ENCODE measurements at regions of chr1 and their contacts with region 1.

Region 1: DNA sequence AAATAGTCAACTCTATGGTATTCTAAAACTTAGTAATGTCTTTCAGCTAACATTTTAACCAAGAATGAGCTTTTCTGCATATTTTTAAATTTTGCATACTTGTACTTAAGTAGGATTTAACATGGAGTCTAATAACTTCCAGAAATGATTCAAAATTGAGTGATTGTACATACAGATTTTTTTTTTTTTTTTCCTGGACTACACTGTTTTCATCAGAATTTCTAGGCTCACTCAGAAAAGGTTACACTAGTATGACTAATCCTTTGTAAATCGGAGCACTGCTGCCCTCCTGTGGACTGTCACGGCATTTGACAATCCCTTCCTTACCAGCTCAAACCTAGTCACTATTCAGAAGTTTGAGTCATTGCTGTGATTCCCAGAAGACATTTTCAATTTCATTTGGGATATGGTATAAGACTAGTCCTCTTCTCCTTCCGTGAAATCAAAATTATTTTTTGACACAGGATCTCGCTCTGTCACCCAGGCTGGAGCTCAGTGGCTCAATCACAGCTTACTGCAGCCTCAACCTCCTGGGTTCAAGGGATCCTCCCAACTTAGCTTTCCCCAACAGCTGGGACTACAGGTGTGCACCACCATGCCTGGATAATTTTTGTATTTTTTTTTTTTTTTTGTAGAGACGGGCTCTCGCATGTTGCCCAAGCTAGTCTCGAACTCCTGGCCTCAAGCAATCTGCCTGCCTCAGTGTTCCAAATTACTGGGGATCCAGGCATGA is 45.5 kb downstream of the CD46 start:
- DNase-seq: peak; percentile 97
- H3K4me3 Mint-ChIP-seq: no peak overlapping the region
- H3K27ac Mint-ChIP-seq: peak overlapping the region; percentile 46
- H3K4me1 Mint-ChIP-seq: peaks cover 14% of the 10 kb centered on the region
- H3K27me3 Mint-ChIP-seq: no peaks in the 10 kb centered on the region
- CTCF ChIP-seq: peak; percentile 95

Region 2: DNA sequence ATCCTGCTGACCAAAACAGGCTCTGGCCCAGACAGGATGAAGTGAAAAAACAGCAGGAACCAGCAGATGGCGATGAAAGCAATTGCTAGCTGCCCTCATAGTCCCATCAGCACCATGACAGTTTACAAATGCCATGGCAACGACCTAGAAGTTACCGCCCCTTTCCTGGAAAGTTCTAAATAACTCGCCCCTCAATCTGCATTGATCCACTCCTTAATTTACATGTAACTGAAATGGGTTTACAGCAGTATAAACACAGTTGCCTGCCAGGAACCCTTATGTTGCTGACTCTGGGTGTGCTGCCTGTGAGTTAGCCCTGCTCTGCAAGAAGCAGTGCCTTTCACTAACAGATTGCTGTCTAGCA is 218.0 kb before region 1 on chr1:
- CTCF ChIA-PET with region 1: interaction called, 25 read pairs
- POLR2A ChIA-PET with region 1: interaction called, 4 read pairs
- intact Hi-C with region 1: no loop called
- DNase-seq: peak; percentile 83
- H3K4me3 Mint-ChIP-seq: no peak overlapping the region
- H3K27ac Mint-ChIP-seq: no peak overlapping the region
- H3K4me1 Mint-ChIP-seq: no peaks in the 10 kb centered on the region
- H3K27me3 Mint-ChIP-seq: peaks cover 25% of the 10 kb centered on the region
- CTCF ChIP-seq: peak; percentile 74

Region 3: DNA sequence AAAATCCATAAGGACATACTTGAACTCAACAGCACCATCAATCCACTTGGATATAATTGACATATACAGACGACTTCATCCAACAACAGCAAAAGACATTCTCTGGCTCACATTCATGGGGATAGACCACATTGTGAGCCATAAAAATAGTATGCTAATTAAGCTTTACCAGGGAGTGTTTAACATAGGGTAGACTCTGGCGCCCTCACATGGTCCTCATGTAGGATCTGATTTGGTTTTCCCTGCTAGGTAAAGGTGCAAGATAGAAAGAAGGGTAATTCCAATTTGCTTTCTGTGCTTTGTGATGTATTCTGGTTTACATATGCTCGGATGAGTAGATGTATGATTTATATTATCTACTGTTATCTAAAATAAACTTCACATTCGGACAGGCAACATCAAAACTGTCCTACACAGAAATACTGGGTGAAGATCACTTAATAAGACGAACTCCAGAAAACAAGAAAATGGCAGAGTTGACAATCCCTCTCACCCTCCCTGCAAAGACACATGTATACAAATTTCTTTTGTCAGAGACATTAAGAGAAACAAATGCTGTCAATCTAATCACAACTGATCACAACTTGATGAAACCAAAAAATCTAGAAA is 124.8 kb before region 1 on chr1:
- CTCF ChIA-PET with region 1: interaction called, 4 read pairs
- POLR2A ChIA-PET with region 1: interaction called, 4 read pairs
- intact Hi-C with region 1: loop called (anchors 1 kb)
- DNase-seq: peak; percentile 86
- H3K4me3 Mint-ChIP-seq: no peak overlapping the region
- H3K27ac Mint-ChIP-seq: no peak overlapping the region
- H3K4me1 Mint-ChIP-seq: peaks cover 12% of the 10 kb centered on the region
- H3K27me3 Mint-ChIP-seq: peaks cover 75% of the 10 kb centered on the region
- CTCF ChIP-seq: peak; percentile 90

Region 4: GRCh38 chr1:207751790-207752455 is 45.5 kb before region 1 on chr1 and contains the start of gene CD46:
- CTCF ChIA-PET with region 1: interaction called, 46 read pairs
- POLR2A ChIA-PET with region 1: interaction called, 84 read pairs
- intact Hi-C with region 1: loop called (anchors 1 kb)
- DNase-seq: peak; percentile 100
- H3K4me3 Mint-ChIP-seq: peak within 1 kb of the TSS; percentile 99
- H3K27ac Mint-ChIP-seq: peak within 1 kb of the TSS; percentile 96
- H3K4me1 Mint-ChIP-seq: peaks cover 63% of the 10 kb centered on the region
- H3K27me3 Mint-ChIP-seq: no peaks in the 10 kb centered on the region
- CTCF ChIP-seq: no peak
- total RNA-seq, gene CD46: 181 and 184 TPM in 2 replicates

Region 5: DNA sequence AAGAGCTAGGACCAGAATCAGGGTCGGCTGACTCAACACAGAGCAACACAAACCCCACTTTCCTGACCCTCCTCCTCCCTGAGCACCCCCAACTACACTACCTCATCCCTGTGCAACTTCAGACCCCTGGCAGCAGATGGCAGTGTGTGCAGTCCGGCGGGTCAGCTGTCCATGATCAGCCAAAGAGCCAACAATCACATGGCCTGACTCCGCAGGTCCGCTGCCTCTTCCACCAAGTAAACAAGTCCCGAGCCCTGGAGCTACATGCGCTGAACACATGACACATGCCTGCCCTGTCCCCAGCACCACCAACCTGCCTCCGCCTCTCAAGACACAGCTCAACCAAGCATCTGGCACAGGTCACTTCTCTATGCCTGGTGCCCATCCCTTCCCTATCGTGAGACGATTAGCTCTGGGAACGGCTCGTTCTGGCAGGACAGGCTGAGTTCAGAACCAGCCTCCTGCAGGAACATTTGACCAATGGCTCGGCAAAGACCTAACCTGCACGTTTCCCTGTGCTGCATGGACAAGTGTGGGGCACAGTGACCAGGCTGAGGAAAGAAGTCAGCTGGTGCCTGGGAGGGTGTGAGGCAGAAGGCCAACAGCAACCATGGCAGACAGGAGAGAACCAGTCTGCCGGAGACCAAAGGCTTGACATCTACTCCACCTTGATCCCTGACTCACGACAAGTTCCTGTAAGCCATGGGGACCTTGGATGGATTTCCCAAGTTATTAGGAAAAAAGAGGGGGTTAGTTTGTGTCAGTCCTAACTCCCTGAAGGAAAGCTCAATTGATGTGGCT is 14.7 kb after region 1 on chr1:
- CTCF ChIA-PET with region 1: interaction called, 25 read pairs
- POLR2A ChIA-PET with region 1: interaction called, 13 read pairs
- intact Hi-C with region 1: no loop called
- DNase-seq: peak; percentile 54
- H3K4me3 Mint-ChIP-seq: no peak overlapping the region
- H3K27ac Mint-ChIP-seq: peak overlapping the region; percentile 68
- H3K4me1 Mint-ChIP-seq: peaks cover 75% of the 10 kb centered on the region
- H3K27me3 Mint-ChIP-seq: no peaks in the 10 kb centered on the region
- CTCF ChIP-seq: peak; percentile 40

Region 6: GRCh38 chr1:207828485-207829158 is 31.2 kb after region 1 on chr1:
- CTCF ChIA-PET with region 1: interaction called, 68 read pairs
- POLR2A ChIA-PET with region 1: interaction called, 61 read pairs
- intact Hi-C with region 1: no loop called
- DNase-seq: peak; percentile 96
- H3K4me3 Mint-ChIP-seq: no peak overlapping the region
- H3K27ac Mint-ChIP-seq: peak overlapping the region; percentile 96
- H3K4me1 Mint-ChIP-seq: peaks cover 78% of the 10 kb centered on the region
- H3K27me3 Mint-ChIP-seq: no peaks in the 10 kb centered on the region
- CTCF ChIP-seq: peak; percentile 99

Region 7: DNA sequence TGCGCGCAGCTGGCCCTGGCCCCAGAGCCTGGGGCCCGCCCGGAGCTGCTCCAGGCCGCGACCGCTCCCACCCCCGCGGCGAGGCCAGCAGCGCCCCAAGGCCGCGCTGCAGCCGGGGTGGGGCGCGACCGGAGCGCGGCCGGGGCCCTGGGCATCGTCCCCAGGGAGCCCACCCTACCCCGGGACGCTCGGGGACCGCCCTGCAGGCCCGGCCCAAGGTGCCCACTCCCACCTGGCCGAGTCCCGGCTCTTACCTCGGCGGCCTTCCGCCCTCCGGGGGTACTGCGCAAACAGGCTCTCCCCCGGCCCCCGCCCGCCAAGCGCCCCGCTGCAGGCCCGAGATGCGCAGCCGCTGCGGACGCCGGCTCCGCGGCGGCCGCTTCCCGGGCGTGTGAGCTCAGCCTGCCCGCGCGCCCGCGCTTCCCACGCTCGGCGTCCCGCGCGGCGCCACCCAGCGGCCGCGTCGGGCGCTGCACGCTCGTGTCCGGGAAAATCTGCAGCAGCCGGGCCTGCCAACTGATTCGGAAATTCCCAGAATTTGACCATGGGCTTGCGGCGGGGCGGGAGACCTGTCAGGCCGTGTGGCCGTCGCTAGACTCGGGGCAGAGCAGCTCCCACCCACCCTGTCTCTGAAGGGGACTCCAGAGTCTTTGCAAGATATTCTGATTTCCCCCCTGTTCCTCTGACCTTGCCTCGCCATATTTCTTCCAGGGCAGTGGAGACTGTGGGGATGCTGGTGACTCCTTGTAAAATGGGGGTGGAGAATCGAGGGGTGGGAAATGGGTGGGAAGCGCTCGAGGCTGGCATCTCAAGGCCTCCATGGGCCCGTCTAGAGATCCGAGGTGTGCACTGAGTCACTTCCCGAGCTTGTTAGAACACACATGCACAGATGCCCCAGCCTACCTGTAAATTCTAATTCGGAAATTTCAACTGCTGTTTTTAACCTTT is 71.7 kb after region 1 on chr1:
- CTCF ChIA-PET with region 1: interaction called, 38 read pairs
- POLR2A ChIA-PET with region 1: interaction called, 14 read pairs
- intact Hi-C with region 1: loop called (anchors 1 kb)
- DNase-seq: peak; percentile 89
- H3K4me3 Mint-ChIP-seq: peak overlapping the region; percentile 84
- H3K27ac Mint-ChIP-seq: peak overlapping the region; percentile 32
- H3K4me1 Mint-ChIP-seq: peaks cover 29% of the 10 kb centered on the region
- H3K27me3 Mint-ChIP-seq: no peaks in the 10 kb centered on the region
- CTCF ChIP-seq: peak; percentile 99